ENCODE measurements at regions of chr19 and their contacts with region 1.

Region 1: DNA sequence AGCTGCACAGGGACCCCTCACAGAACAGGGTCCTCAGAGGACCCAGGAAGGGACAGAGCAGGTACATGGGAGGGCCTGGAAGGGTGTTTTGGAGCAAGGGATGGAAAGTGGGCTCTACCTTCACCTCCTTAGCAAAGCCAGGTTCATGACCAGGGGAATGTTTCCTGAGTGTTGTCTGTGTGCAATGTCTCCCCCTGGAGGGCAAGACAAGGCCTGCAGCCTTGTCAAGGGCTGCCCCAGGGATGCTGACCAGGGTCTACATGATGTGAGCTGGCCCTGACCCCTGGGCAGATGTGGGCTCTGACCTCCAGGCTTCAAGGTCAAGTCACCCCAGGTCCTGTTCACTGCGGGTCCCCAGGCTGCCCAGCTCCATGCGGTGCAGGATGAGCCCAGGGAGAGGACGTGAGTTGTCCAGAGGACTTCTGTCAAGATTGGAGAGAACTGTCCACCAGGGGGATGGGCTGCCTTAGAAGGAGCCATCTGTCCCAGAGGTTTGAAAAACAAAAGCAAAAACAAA is 1.0 kb upstream of the CEACAM1 start:
- DNase-seq: peak; percentile 57
- H3K4me3 ChIP-seq: no peak overlapping the region
- H3K27ac ChIP-seq: no peak overlapping the region
- H3K4me1 ChIP-seq: peaks cover 8% of the 10 kb centered on the region
- H3K27me3 ChIP-seq: no peaks in the 10 kb centered on the region
- CTCF ChIP-seq: peak; percentile 93
- POLR2A ChIP-seq: no peak

Region 2: DNA sequence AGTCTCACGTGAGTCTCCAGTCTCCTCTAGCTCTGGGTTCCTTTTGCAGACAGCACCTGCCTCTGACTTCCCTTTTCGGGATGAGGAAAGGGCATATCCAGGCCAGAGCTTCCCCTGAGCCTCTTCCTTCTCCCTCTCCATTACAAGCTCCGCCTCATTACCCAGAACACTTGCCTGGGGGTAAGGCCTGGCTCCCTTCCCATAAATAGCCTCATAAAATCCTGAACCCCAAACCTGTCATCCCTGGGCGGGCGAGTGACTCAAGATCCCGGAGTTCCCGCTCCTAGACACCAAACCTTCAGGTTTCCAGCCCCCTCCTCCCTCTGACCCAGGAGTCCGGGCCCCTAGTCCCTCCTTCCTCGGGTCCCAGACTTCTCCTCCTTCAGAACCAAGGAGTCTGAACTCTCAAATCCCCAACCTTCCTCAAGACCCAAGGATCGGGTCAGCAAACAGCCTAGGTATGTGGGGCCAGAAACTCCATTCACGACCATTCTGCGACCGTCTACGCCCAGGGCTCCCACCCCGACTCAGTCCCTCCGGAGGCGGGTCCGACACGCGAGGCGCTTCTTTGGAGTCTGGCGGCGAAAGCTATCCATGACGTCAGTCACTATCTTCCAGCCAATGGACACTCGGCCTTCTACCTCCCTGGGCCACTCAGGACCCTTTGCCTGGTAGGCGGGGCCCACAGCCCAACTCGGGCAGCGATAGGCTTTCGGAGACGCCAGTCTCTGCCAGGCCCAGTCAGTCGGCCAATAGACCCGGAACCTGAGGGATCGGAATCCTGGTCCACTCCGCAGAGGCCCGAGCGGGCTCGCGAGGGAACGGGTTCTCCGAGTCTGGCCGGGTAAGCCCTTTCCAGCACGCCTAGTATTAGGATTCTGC is 132.7 kb before region 1 on chr19:
- CTCF ChIA-PET with region 1: no interaction called
- POLR2A ChIA-PET with region 1: no interaction called
- dilution Hi-C with region 1: no loop called
- intact Hi-C with region 1: no loop called
- DNase-seq: peak; percentile 100
- H3K4me3 ChIP-seq: peak overlapping the region; percentile 36 to 73 (median 49)
- H3K27ac ChIP-seq: peak overlapping the region; percentile 77
- H3K4me1 ChIP-seq: peaks cover 17% of the 10 kb centered on the region
- H3K27me3 ChIP-seq: no peaks in the 10 kb centered on the region
- CTCF ChIP-seq: no peak
- POLR2A ChIP-seq: peak; percentile 87

Region 3: GRCh38 chr19:42455621-42456081 is 73.7 kb before region 1 on chr19:
- CTCF ChIA-PET with region 1: interaction called, 137 read pairs
- POLR2A ChIA-PET with region 1: no interaction called
- dilution Hi-C with region 1: no loop called
- intact Hi-C with region 1: loop called (anchors 1 kb)
- DNase-seq: no peak
- H3K4me3 ChIP-seq: no peak overlapping the region
- H3K27ac ChIP-seq: no peak overlapping the region
- H3K4me1 ChIP-seq: no peaks in the 10 kb centered on the region
- H3K27me3 ChIP-seq: peaks cover 7 to 14% of the 10 kb centered on the region in 2 experiments
- CTCF ChIP-seq: no peak
- POLR2A ChIP-seq: no peak

Region 4: GRCh38 chr19:42555317-42555716 is 26.0 kb after region 1 on chr19:
- CTCF ChIA-PET with region 1: no interaction called
- POLR2A ChIA-PET with region 1: no interaction called
- dilution Hi-C with region 1: no loop called
- intact Hi-C with region 1: no loop called
- DNase-seq: no peak
- H3K4me3 ChIP-seq: no peak overlapping the region
- H3K27ac ChIP-seq: no peak overlapping the region
- H3K4me1 ChIP-seq: no peaks in the 10 kb centered on the region
- H3K27me3 ChIP-seq: no peaks in the 10 kb centered on the region
- CTCF ChIP-seq: no peak
- POLR2A ChIP-seq: no peak

Measured in endothelial cell of umbilical vein (primary cell).